GM12878 (cell line): ENCODE measurements at regions of chr2 and their contacts with region 1.

Region 1: GRCh38 chr2:134706587-134707329 is 12.0 kb downstream of the TMEM163 start:
- DNase-seq: no peak
- ATAC-seq: no peak
- H3K4me3 ChIP-seq: no peak overlapping the region
- H3K27ac ChIP-seq: no peak overlapping the region
- H3K4me1 ChIP-seq: no peaks in the 10 kb centered on the region
- H3K27me3 ChIP-seq: no peaks in the 10 kb centered on the region
- CTCF ChIP-seq: no peak
- EP300 ChIP-seq: no peak
- POLR2A ChIP-seq: no peak
- RAD21 ChIP-seq: no peak

Region 2: GRCh38 chr2:134668821-134669220 is 37.9 kb before region 1 on chr2:
- CTCF ChIA-PET with region 1: no interaction called
- POLR2A ChIA-PET with region 1: no interaction called
- RAD21 ChIA-PET with region 1: no interaction called
- SMC1A ChIA-PET with region 1: no interaction called
- in situ Hi-C with region 1: no loop called
- intact Hi-C with region 1: no loop called
- DNase-seq: no peak
- ATAC-seq: peak; percentile 44
- H3K4me3 ChIP-seq: no peak overlapping the region
- H3K27ac ChIP-seq: no peak overlapping the region
- H3K4me1 ChIP-seq: no peaks in the 10 kb centered on the region
- H3K27me3 ChIP-seq: no peaks in the 10 kb centered on the region
- CTCF ChIP-seq: no peak
- EP300 ChIP-seq: no peak
- POLR2A ChIP-seq: no peak
- RAD21 ChIP-seq: no peak

Region 3: GRCh38 chr2:134727385-134727784 is 20.6 kb after region 1 on chr2:
- CTCF ChIA-PET with region 1: no interaction called
- POLR2A ChIA-PET with region 1: no interaction called
- RAD21 ChIA-PET with region 1: no interaction called
- SMC1A ChIA-PET with region 1: no interaction called
- in situ Hi-C with region 1: no loop called
- intact Hi-C with region 1: no loop called
- DNase-seq: no peak
- ATAC-seq: no peak
- H3K4me3 ChIP-seq: no peak overlapping the region
- H3K27ac ChIP-seq: no peak overlapping the region
- H3K4me1 ChIP-seq: no peaks in the 10 kb centered on the region
- H3K27me3 ChIP-seq: peaks cover 0 to 12% of the 10 kb centered on the region in 2 experiments; a peak in 1 of 4 replicates
- CTCF ChIP-seq: no peak
- EP300 ChIP-seq: no peak
- POLR2A ChIP-seq: no peak
- RAD21 ChIP-seq: no peak

Region 4: GRCh38 chr2:134796373-134796772 is 89.6 kb after region 1 on chr2:
- CTCF ChIA-PET with region 1: no interaction called
- POLR2A ChIA-PET with region 1: interaction called, 10 read pairs
- RAD21 ChIA-PET with region 1: no interaction called
- SMC1A ChIA-PET with region 1: no interaction called
- in situ Hi-C with region 1: no loop called
- intact Hi-C with region 1: no loop called
- DNase-seq: no peak
- ATAC-seq: no peak
- H3K4me3 ChIP-seq: no peak overlapping the region
- H3K27ac ChIP-seq: no peak overlapping the region
- H3K4me1 ChIP-seq: no peaks in the 10 kb centered on the region
- H3K27me3 ChIP-seq: no peaks in the 10 kb centered on the region; a peak in 1 of 4 replicates
- CTCF ChIP-seq: no peak
- EP300 ChIP-seq: no peak
- POLR2A ChIP-seq: no peak
- RAD21 ChIP-seq: no peak